ENCODE measurements at regions of chr18 and their contacts with region 1.

Region 1: GRCh38 chr18:23215364-23215763 is 80.1 kb downstream of the CABLES1 start:
- DNase-seq: no peak
- H3K4me3 ChIP-seq: no peak overlapping the region
- H3K27ac ChIP-seq: no peak overlapping the region
- H3K4me1 ChIP-seq: peaks cover 4% of the 10 kb centered on the region
- CTCF ChIP-seq: no peak

Region 2: GRCh38 chr18:23225503-23225902 is 10.1 kb after region 1 on chr18:
- CTCF ChIA-PET with region 1: interaction called, 3 read pairs
- POLR2A ChIA-PET with region 1: interaction called, 12 read pairs
- intact Hi-C with region 1: no loop called
- DNase-seq: no peak
- H3K4me3 ChIP-seq: no peak overlapping the region
- H3K27ac ChIP-seq: peak overlapping the region; percentile 100
- H3K4me1 ChIP-seq: peaks cover 93% of the 10 kb centered on the region
- CTCF ChIP-seq: no peak